Left cardiac atrium (tissue), 4 donors: ENCODE measurements at regions of chr3 and their contacts with region 1.

Region 1: DNA sequence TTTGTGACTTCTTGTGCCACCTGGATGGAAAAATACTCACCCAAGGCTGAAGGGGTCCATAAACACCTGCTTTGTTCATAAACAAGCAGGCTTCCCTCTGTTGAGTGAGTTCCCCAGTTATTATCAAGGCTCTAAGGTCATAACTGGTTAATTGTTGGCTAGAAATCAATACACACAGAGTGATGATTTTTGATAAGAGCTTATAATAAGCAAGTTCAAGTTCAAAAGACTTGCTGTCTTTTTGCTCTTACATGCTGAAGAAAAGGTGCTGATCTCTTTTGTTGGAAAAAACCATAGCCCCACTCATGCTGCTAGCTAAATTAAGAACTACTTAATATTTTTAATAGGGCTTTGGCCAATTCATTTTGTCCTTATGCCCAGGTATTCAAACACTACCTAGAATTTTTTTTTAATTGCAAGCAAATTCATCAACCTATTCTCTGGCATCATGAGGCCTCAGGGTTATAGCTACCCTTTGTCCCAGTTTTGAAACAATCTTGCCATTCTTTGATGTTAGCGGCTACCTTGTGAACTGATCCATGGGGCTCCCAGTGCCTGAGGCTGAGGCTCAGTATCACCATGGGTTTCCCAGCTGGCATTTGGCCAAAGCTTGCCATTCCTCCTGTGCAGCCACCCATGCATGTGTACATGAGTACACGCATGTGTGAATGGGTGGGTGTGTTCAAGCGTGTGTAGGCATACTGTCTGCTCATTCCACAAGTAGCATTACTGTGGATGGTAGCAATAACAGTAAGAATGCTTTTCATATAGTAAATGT is 127.6 kb upstream of the LPP start:
- DNase-seq: no peak
- ATAC-seq: no peak

Region 2: GRCh38 chr3:187986514-187986934 is 39.9 kb before region 1 on chr3:
- intact Hi-C with region 1: loop called in 1 of 2 experiments (anchors 5 kb)
- DNase-seq: no peak
- ATAC-seq: peak in 1 of 2 donors; percentile 88

Region 3: DNA sequence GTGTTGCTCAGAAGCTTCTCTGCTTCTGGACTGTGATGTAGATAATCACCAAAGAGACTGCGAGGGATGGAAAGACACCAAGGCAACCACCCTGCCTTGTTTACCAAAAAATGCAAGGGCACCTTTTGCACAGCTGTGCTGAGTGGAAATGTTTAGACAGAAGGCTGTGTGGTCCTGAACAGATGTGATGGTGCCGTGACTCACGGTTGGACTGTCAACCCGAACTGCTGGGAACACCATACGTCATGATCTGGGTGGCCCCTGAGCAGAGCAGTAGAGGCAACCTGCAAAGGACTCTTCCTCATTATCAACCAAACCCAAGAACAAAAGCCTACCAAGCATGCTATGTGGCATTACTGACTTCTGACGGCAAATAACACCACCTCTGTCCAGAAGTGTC is 66.3 kb after region 1 on chr3:
- intact Hi-C with region 1: no loop called
- DNase-seq: no peak
- ATAC-seq: no peak